ENCODE measurements at regions of chr22 and their contacts with region 1.

Region 1: DNA sequence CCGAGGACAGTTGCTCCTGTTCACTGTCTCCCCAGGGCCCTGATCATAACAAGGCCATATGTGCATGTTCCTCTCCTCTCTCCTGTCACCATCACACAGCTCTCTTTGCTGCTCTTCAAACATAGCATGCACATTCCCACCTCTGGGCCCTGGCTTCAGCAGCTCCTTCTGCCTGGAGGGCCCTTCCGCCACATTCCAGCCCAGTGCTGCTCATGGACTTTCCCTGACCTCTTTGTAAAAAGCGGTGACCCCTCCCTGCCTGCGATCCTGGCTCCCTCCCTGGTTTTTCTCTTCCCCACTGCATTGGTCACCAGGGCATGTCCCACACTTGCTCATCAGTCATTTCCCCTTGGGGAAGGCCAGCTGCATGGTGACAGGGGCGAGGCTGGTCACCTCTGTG is 98.2 kb downstream of the MYO18B start:
- DNase-seq: no peak
- ATAC-seq: peak; percentile 43
- H3K4me3 ChIP-seq: no peak overlapping the region
- H3K27ac ChIP-seq: no peak overlapping the region
- H3K4me1 ChIP-seq: peaks cover 23% of the 10 kb centered on the region
- H3K27me3 ChIP-seq: no peaks in the 10 kb centered on the region
- CTCF ChIP-seq: no peak
- EP300 ChIP-seq: no peak
- POLR2A ChIP-seq: no peak
- RAD21 ChIP-seq: no peak

Region 2: GRCh38 chr22:25829808-25830777 is 10.1 kb before region 1 on chr22:
- CTCF ChIA-PET with region 1: no interaction called
- POLR2A ChIA-PET with region 1: no interaction called
- RAD21 ChIA-PET with region 1: interaction called, 10 read pairs
- SMC1A ChIA-PET with region 1: interaction called, 3 read pairs
- in situ Hi-C with region 1: no loop called
- intact Hi-C with region 1: no loop called
- DNase-seq: no peak
- ATAC-seq: peak; percentile 51
- H3K4me3 ChIP-seq: no peak overlapping the region
- H3K27ac ChIP-seq: no peak overlapping the region
- H3K4me1 ChIP-seq: peaks cover 12% of the 10 kb centered on the region
- H3K27me3 ChIP-seq: no peaks in the 10 kb centered on the region; a peak in 1 of 4 replicates
- CTCF ChIP-seq: no peak
- EP300 ChIP-seq: peak in 1 of 2 experiments; percentile 70; a peak in 2 of 4 replicates
- POLR2A ChIP-seq: no peak
- RAD21 ChIP-seq: no peak

Region 3: DNA sequence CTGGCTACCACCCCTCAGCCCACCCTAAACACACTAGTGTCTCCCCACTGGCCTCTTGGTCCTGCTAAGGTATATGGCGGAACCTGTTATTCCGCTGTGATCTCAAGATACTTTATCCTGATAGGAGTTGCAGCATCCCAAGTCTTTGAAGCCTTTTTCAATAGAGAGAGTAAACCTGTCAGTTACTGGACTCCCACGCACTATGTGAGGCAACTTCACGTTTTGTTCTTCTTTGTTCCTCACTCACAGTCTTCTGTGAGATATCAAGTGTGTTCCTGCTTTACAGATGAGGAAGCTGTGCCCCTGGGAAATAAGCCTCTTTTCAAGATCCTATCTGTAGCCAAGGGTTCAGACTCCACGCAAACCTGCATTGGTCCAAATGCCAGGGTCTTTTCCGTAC is 29.6 kb after region 1 on chr22:
- CTCF ChIA-PET with region 1: no interaction called
- POLR2A ChIA-PET with region 1: no interaction called
- RAD21 ChIA-PET with region 1: no interaction called
- SMC1A ChIA-PET with region 1: no interaction called
- in situ Hi-C with region 1: no loop called
- intact Hi-C with region 1: no loop called
- DNase-seq: no peak
- ATAC-seq: no peak
- H3K4me3 ChIP-seq: no peak overlapping the region
- H3K27ac ChIP-seq: no peak overlapping the region
- H3K4me1 ChIP-seq: no peaks in the 10 kb centered on the region
- H3K27me3 ChIP-seq: no peaks in the 10 kb centered on the region
- CTCF ChIP-seq: no peak
- EP300 ChIP-seq: no peak
- POLR2A ChIP-seq: no peak
- RAD21 ChIP-seq: no peak

Region 4: DNA sequence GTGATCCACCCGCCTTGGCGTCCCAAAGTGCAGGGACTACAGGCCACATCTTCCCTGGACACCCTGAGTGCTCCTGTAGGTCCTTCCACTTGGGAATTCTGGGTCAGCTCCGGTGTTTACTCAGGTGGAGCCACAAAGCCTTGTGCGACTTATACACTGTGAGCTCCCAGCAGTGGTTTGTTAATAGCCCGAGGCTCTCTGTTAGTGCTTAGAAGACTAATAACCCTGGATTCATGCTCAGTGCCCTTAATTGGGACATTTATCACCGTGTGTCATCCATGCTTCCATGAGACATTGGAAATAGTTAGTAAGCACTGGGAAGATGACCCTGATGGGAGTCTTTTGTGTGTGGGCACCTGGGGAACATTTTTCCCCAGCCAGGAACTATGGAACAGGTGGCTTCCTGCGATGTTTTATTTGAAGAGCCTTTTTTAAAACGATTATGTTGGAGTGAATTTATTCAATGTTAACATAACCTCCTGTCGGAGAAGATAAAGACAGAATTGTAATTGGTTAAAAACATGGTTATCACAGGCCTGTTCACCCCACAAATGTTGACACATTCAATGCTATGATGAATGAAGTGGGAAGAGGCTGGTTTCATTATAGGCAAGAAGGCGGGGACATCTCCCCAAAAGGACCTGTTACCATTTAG is 90.7 kb after region 1 on chr22:
- CTCF ChIA-PET with region 1: no interaction called
- POLR2A ChIA-PET with region 1: no interaction called
- RAD21 ChIA-PET with region 1: no interaction called
- SMC1A ChIA-PET with region 1: no interaction called
- in situ Hi-C with region 1: no loop called
- intact Hi-C with region 1: no loop called
- DNase-seq: no peak
- ATAC-seq: no peak
- H3K4me3 ChIP-seq: no peak overlapping the region
- H3K27ac ChIP-seq: no peak overlapping the region
- H3K4me1 ChIP-seq: no peaks in the 10 kb centered on the region
- H3K27me3 ChIP-seq: peaks cover 0 to 4% of the 10 kb centered on the region in 2 experiments; a peak in 3 of 4 replicates
- CTCF ChIP-seq: no peak
- EP300 ChIP-seq: no peak
- POLR2A ChIP-seq: no peak
- RAD21 ChIP-seq: no peak